ENCODE measurements at regions of chr21 and their contacts with region 1.

Region 1: DNA sequence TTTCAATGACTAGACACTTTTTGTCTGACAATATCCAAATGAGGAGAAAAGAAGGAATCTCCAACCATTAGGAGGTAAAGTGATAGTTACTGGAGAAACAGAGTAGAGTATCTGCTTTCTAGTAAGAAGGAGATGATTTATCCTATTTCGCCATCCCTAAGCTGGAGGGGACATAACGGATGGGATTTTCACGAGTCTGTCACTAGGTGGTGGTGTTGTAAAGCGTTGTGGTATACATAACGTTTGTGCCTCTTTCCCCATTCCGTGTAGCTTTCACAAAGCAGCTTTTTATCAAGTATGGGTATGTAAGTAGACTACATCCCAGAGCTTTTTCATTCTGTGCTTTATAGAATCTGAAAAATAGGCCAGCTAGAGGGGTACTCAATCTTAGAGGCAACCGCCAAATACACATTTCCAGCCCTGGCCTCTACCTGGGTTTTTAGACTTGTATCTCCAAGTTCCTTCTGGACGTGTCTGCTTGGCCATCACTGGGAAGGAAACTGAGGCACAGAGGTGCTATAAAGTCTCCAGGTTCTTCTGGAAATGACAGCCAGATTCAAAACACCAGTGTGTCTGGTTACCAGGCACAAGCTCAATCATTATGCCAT is 33.3 kb upstream of the FAM3B start:
- DNase-seq: peak; percentile 40
- H3K4me3 Mint-ChIP-seq: no peak overlapping the region
- H3K27ac Mint-ChIP-seq: no peak overlapping the region
- H3K4me1 Mint-ChIP-seq: no peaks in the 10 kb centered on the region
- H3K27me3 Mint-ChIP-seq: peaks cover 29% of the 10 kb centered on the region

Region 2: DNA sequence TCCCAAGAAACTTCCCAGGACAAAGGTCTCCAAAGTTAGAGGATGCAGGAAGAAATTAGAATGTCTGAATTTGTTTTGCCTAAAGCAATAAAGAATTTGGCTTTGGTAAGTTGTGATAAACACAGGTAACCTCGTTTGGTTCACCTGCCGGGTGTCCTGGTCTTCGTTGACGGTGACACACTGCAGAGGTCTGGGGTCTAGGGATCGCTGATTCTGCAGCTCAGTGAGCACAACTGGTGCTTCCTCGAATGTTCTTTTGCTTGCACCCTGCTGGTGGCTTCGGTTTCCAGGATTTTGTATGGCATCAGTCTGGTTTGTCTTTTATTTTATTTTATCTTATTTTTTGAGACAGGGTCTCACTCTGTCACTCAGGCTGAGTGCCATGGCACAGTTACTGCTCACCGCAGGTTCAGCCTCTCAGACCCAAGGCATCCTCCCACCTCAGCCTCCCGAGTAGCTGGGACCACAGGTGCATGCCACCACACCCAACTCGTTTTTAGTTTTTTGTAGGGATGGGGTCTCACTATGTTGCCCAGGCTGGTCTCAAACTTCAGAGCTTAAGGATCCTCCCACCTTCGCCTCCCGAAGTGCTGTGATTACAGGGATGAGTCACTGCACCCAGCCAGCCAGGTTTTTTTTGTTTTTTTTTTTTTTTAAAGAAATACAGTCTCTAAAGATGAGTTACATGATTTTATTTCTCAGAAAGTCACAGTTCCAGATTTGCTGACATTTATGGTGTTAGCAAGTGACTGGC is 86.5 kb before region 1 on chr21:
- intact Hi-C with region 1: no loop called
- DNase-seq: no peak
- H3K4me3 Mint-ChIP-seq: no peak overlapping the region
- H3K27ac Mint-ChIP-seq: no peak overlapping the region
- H3K4me1 Mint-ChIP-seq: no peaks in the 10 kb centered on the region
- H3K27me3 Mint-ChIP-seq: peaks cover 2% of the 10 kb centered on the region

Region 3: DNA sequence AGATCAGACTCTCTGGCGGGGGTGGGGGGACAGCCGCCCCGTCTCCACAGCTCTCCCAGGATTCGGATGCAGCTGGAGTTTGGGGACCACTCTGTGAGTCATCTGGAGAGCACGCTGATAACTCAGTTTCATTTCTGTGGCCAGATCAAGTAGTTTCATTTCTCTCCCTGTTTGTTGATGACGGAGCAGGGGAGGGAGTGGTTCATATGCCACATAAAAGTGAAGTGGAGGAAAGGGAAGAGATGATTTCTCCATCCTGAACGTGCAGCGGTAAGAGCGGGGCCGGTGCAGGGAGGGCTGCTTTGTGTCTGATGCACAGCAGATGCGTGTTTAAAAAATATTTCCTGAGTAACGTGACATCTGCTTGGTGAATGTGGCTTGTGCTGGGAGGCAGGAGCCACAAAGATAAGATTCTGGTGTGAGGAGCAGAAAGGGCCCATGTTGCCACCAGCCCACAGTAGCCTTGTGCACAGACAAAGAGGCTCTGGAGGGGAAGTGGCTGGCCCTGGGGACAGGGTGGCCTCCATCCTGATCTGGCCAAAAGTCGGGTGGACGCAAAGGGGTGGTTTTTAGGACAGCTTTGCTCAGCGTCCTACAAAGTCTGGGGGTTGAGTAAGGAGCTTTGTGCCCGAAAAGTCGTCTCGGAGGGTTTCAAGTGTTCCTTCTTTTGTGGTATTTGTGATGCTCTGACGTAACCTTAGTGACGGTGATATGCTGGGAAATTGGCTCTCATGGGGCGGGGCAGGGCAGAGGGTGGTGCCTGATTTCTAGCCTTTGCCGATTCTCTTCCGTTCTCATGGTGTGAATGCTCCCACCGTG is 78.7 kb after region 1 on chr21 and contains the start of gene MX2:
- intact Hi-C with region 1: loop called (anchors 5 kb)
- DNase-seq: peak; percentile 79
- H3K4me3 Mint-ChIP-seq: peak within 1 kb of the TSS; percentile 89
- H3K27ac Mint-ChIP-seq: peak within 1 kb of the TSS; percentile 98
- H3K4me1 Mint-ChIP-seq: peaks cover 56% of the 10 kb centered on the region
- H3K27me3 Mint-ChIP-seq: no peaks in the 10 kb centered on the region
- total RNA-seq, gene MX2: 8.2 and 9.4 TPM in 2 replicates

Region 4: DNA sequence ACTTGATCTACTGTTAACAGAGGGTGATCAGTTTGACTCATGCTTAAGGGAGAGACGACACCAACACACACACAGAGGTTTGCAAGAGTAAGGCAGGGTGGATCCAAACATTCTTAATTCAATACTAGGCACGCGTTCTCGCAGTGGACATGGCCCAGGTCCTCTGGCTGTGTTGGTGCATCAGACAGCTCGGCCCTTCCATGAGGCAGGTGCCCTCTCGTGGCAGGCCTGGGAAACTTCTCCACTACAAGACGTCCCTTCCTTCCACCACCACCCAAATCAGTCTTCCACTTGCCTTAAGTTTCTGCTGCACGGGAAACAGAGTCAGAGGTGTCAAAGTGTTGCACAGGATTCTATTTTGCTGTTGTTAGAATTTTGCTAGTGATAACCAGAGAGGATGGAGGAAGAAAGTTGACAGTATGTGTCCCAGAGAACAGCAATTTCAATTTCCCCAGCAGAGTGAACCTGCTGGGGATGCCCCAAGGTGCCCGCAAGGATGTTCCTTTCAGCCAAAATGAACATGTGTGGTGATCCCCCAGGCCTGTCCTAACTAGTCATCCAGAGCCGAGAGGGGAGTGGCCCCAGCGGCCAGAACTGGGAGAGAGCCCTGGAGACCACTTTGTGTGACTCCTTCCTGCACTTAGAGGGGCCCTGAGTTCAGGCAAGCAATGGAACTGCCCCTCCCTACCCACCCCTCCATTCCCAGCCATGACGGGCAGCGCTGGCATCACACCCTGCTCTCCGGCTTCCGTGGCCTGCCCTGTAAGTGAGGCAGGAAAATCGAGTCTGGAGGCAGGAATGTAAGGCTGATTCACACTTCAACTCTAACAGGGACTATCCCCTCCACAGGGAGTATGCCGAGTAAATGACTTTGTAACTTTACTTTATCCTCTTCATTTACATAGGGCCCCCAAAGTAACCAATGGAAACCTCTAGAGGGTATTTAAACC is 177.5 kb after region 1 on chr21:
- intact Hi-C with region 1: loop called (anchors 1 kb)
- DNase-seq: peak; percentile 9
- H3K4me3 Mint-ChIP-seq: no peak overlapping the region
- H3K27ac Mint-ChIP-seq: no peak overlapping the region
- H3K4me1 Mint-ChIP-seq: peaks cover 11% of the 10 kb centered on the region
- H3K27me3 Mint-ChIP-seq: no peaks in the 10 kb centered on the region

Region 5: DNA sequence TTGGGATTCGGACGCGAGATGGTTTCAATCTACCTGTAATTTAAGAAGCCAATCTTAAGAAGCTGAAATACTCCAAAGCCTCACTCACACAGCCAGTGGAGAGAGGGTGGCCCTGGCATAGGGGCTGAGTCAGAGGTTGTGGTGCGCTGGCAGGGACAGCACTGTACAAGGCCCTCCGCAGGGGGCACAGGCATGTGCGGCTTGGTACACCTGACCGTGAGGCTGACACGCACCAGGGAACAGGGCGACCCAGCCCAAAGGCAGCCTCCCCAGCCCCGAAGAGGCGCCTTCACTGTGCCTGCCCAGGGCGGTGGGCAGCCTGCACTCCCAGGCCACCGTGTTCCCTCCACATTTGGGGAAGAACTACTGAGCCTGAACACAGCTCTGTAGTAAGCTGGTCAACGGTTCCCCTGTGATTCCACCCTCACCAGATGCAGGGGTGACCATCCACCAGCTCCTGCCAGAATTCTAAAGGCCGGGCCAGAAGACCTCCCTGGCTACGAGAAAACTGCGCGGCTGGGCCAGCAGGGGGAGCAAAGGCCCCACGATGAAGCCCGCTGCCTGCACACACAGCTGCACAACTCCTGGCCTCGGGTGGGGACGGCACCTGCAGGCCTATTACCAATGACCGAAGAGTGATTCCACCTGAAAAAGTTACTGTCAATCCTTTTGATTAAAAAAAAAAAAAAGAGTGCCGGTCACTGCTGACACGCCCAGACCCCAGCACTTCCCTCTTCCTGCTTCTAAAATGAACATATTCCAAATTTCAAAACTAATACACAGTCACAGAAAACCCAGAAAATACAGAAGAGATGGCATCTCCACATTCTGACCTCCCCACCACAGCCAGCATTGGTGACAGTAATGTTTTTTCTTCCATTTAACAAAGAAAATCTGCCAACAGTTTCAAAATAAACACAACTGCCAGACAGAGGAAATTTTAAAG is 533.2 kb after region 1 on chr21:
- intact Hi-C with region 1: loop called (anchors 1 kb)
- DNase-seq: peak; percentile 22
- H3K4me3 Mint-ChIP-seq: no peak overlapping the region
- H3K27ac Mint-ChIP-seq: no peak overlapping the region
- H3K4me1 Mint-ChIP-seq: no peaks in the 10 kb centered on the region
- H3K27me3 Mint-ChIP-seq: no peaks in the 10 kb centered on the region

Region 6: GRCh38 chr21:42117229-42117966 is 834.1 kb after region 1 on chr21:
- intact Hi-C with region 1: loop called (anchors 1 kb)
- DNase-seq: peak; percentile 47
- H3K4me3 Mint-ChIP-seq: no peak overlapping the region
- H3K27ac Mint-ChIP-seq: no peak overlapping the region
- H3K4me1 Mint-ChIP-seq: peaks cover 13% of the 10 kb centered on the region
- H3K27me3 Mint-ChIP-seq: peaks cover 38% of the 10 kb centered on the region